ENCODE measurements at regions of chr12 and their contacts with region 1.

Region 1: GRCh38 chr12:12356886-12357718 is at the start of gene BORCS5:
- DNase-seq: peak; percentile 97 to 99 (median 99)
- H3K4me3 ChIP-seq: peak within 1 kb of the TSS; percentile 62
- H3K4me3 Mint-ChIP-seq: peak within 1 kb of the TSS; percentile 88 to 98 (median 97)
- H3K27ac ChIP-seq: peak within 1 kb of the TSS; percentile 94
- H3K27ac Mint-ChIP-seq: peak within 1 kb of the TSS; percentile 91 to 100 (median 99)
- H3K4me1 ChIP-seq: peaks cover 26% of the 10 kb centered on the region
- H3K4me1 Mint-ChIP-seq: peaks cover 36 to 54% (median 52%) of the 10 kb centered on the region in 3 donors
- H3K27me3 ChIP-seq: no peaks in the 10 kb centered on the region
- H3K27me3 Mint-ChIP-seq: peaks cover 0 to 1% of the 10 kb centered on the region in 2 donors
- total RNA-seq, gene BORCS5: 36.4 to 39.7 TPM

Region 2: DNA sequence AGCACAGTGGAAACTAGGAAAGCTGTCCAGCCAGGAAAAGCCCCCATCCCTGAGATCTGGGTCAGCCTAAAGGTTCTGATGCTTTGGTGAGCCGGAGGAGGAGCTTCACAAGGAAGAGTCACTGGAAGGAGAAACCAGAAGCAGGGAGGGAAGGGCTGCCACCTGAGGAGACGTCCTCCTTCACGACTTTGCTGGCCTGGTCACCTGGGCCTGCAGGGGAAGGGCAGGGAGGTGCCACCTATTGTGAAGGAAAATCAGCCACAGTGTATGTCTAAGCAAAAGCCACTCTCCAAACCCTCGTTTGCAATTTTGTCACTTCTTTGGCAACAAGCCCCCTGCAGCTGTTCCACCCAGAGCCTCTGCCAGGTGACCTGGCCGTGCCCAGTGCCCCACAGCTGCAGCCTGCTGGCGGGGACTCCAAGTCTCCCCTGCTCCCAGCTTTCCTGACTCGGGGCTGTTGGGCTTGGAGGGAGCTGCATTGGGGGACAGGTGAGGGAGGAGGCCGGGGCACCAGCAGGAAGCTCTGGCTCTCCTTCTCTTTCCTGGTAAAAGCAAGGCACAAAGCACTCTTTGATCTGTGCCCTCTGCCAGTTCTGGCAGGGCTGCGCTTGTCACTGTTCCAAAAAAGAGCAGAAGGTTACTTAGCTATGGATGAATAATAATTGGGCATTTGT is 407.2 kb before region 1 on chr12:
- CTCF ChIA-PET with region 1: no interaction called
- POLR2A ChIA-PET with region 1: no interaction called
- DNase-seq: no peak
- H3K4me3 ChIP-seq: no peak overlapping the region
- H3K4me3 Mint-ChIP-seq: no peak overlapping the region
- H3K27ac ChIP-seq: no peak overlapping the region
- H3K27ac Mint-ChIP-seq: peak overlapping the region in 1 of 8 donors; percentile 48
- H3K4me1 ChIP-seq: no peaks in the 10 kb centered on the region
- H3K4me1 Mint-ChIP-seq: peaks cover 15 to 21% (median 16%) of the 10 kb centered on the region in 3 donors
- H3K27me3 ChIP-seq: no peaks in the 10 kb centered on the region
- H3K27me3 Mint-ChIP-seq: peaks cover 7 to 12% of the 10 kb centered on the region in 2 donors

Region 3: DNA sequence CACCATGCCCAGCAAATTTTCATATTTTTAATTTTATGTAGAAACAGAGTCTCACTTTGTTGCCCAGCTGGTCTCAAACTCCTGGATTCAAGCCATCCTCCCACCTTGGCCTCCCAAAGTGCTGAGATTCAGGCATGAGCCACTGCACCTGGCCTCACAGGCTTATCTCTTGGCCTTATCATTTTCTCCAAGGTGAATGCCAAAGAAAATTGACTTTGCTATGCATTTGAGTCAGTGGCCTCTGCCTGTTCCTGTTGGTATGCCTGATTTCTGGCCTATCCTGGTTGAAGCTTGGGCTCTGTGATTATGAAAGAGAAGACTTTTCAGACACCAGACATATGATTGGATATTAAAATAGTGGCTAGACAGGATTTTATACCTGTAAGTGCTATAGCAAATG is 41.3 kb before region 1 on chr12:
- CTCF ChIA-PET with region 1: no interaction called
- POLR2A ChIA-PET with region 1: no interaction called
- DNase-seq: no peak
- H3K4me3 ChIP-seq: no peak overlapping the region
- H3K4me3 Mint-ChIP-seq: no peak overlapping the region
- H3K27ac ChIP-seq: no peak overlapping the region
- H3K27ac Mint-ChIP-seq: no peak overlapping the region
- H3K4me1 ChIP-seq: no peaks in the 10 kb centered on the region
- H3K4me1 Mint-ChIP-seq: no peaks in the 10 kb centered on the region
- H3K27me3 ChIP-seq: no peaks in the 10 kb centered on the region
- H3K27me3 Mint-ChIP-seq: peaks cover 7 to 26% of the 10 kb centered on the region in 2 donors

Region 4: DNA sequence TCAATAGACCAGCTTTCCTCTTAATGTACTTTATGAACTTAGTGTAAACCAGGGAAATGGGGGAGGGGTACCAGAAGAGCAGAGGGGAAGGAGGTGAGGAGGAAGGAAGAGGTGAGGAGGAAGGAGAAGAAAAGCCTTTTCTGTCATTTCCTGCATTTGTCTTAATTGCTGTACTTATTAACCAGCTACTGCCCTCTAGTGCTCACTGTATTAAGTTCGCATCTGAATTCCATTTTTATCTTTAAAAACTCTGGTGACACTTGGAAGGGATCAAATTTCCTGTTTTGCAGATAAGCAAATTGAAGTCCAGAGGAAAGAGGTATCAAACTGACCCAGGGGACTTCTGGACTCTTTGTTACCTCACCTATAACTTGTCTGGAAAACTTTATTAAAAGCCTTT is 29.3 kb before region 1 on chr12:
- CTCF ChIA-PET with region 1: interaction called, 18 read pairs
- POLR2A ChIA-PET with region 1: interaction called, 5 read pairs
- DNase-seq: peak in 2 of 5 donors; percentile 37 to 51
- H3K4me3 ChIP-seq: no peak overlapping the region
- H3K4me3 Mint-ChIP-seq: no peak overlapping the region
- H3K27ac ChIP-seq: no peak overlapping the region
- H3K27ac Mint-ChIP-seq: peak overlapping the region in 5 of 8 donors; percentile 20 to 85 (median 59)
- H3K4me1 ChIP-seq: peaks cover 9% of the 10 kb centered on the region
- H3K4me1 Mint-ChIP-seq: peaks cover 4 to 9% (median 8%) of the 10 kb centered on the region in 3 donors
- H3K27me3 ChIP-seq: no peaks in the 10 kb centered on the region
- H3K27me3 Mint-ChIP-seq: no peaks in the 10 kb centered on the region

Region 5: DNA sequence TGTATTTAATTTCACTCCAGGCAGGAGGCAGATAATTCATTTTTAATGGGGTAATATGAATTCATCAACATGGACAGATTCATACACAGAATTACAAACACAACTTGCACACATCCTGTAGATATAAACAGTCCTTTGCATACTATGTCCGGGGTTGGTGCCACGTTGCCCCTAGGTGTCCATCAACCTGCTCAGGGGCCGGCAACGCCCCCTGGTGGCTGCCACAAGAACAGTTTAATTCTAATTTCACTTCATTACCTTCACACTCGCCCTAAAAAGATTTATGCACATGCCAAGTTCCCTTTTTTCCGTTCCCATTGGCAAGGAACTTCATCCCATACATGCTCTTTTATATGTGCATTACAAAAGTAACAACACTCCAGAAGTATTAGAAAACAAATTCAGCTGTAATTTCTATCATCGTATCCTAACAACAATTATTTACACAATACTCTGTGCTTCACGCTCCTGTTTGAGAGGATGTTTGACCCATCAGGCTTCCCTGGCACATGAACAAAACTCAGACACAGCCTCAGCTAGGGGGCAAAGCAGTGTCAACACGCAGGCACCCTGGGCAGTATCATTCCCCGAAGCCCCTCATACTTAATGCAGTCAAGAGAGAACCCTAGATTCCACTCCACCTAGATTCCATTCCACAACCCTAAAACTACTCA is 22.6 kb before region 1 on chr12:
- CTCF ChIA-PET with region 1: interaction called, 18 read pairs
- POLR2A ChIA-PET with region 1: interaction called, 4 read pairs
- DNase-seq: peak; percentile 50 to 69 (median 59)
- H3K4me3 ChIP-seq: no peak overlapping the region
- H3K4me3 Mint-ChIP-seq: peak overlapping the region in 2 of 7 donors; percentile 7 to 15
- H3K27ac ChIP-seq: no peak overlapping the region
- H3K27ac Mint-ChIP-seq: peak overlapping the region in 1 of 8 donors; percentile 29
- H3K4me1 ChIP-seq: peaks cover 6% of the 10 kb centered on the region
- H3K4me1 Mint-ChIP-seq: peaks cover 8 to 15% (median 14%) of the 10 kb centered on the region in 3 donors
- H3K27me3 ChIP-seq: no peaks in the 10 kb centered on the region
- H3K27me3 Mint-ChIP-seq: peaks cover 1 to 7% of the 10 kb centered on the region in 2 donors

Region 6: DNA sequence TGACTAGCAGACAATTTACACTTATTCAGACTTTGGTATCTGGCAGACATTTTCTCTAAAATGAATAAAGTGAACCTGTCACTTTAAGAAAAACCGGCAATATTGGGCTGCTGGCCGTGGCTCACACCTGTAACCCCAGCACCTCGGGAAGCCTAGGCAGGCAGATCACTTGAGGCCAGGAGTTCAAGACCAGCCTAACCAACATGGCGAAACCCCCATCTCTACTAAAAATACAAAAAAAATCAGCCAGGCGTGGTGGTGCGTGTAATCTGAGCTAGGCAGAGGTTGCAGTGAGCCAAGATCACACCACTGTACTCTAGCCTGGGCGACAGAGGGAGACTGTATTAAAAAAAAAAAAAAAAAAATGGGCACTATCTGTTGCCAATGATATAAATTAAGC is 194.0 kb after region 1 on chr12:
- CTCF ChIA-PET with region 1: interaction called, 6 read pairs
- POLR2A ChIA-PET with region 1: interaction called, 12 read pairs
- DNase-seq: no peak
- H3K4me3 ChIP-seq: no peak overlapping the region
- H3K4me3 Mint-ChIP-seq: no peak overlapping the region
- H3K27ac ChIP-seq: no peak overlapping the region
- H3K27ac Mint-ChIP-seq: peak overlapping the region in 4 of 8 donors; percentile 17 to 52 (median 30)
- H3K4me1 ChIP-seq: no peaks in the 10 kb centered on the region
- H3K4me1 Mint-ChIP-seq: peaks cover 29 to 52% (median 42%) of the 10 kb centered on the region in 3 donors
- H3K27me3 ChIP-seq: no peaks in the 10 kb centered on the region
- H3K27me3 Mint-ChIP-seq: no peaks in the 10 kb centered on the region

Region 7: GRCh38 chr12:12562585-12563261 is 205.6 kb after region 1 on chr12 and contains the start of gene DUSP16:
- CTCF ChIA-PET with region 1: interaction called, 10 read pairs
- POLR2A ChIA-PET with region 1: interaction called, 22 read pairs
- DNase-seq: peak; percentile 66 to 89 (median 88)
- H3K4me3 ChIP-seq: peak within 1 kb of the TSS; percentile 71
- H3K4me3 Mint-ChIP-seq: peak within 1 kb of the TSS; percentile 91 to 96 (median 92)
- H3K27ac ChIP-seq: peak within 1 kb of the TSS; percentile 95
- H3K27ac Mint-ChIP-seq: peak within 1 kb of the TSS; percentile 97 to 99 (median 98)
- H3K4me1 ChIP-seq: peaks cover 27% of the 10 kb centered on the region
- H3K4me1 Mint-ChIP-seq: peaks cover 31 to 42% (median 40%) of the 10 kb centered on the region in 3 donors
- H3K27me3 ChIP-seq: no peaks in the 10 kb centered on the region
- H3K27me3 Mint-ChIP-seq: peaks cover 0 to 4% of the 10 kb centered on the region in 2 donors
- total RNA-seq, gene DUSP16: 37.5 to 41.2 TPM

Region 8: GRCh38 chr12:12716793-12717585 is 359.9 kb after region 1 on chr12 and contains the start of gene CDKN1B:
- CTCF ChIA-PET with region 1: interaction called, 14 read pairs
- POLR2A ChIA-PET with region 1: interaction called, 67 read pairs
- DNase-seq: peak; percentile 82 to 92 (median 87)
- H3K4me3 ChIP-seq: peak within 1 kb of the TSS; percentile 96
- H3K4me3 Mint-ChIP-seq: peak within 1 kb of the TSS; percentile 92 to 99 (median 99)
- H3K27ac ChIP-seq: peak within 1 kb of the TSS; percentile 98
- H3K27ac Mint-ChIP-seq: peak within 1 kb of the TSS; percentile 96 to 100 (median 98)
- H3K4me1 ChIP-seq: peaks cover 37% of the 10 kb centered on the region
- H3K4me1 Mint-ChIP-seq: peaks cover 52 to 68% (median 62%) of the 10 kb centered on the region in 3 donors
- H3K27me3 ChIP-seq: no peaks in the 10 kb centered on the region
- H3K27me3 Mint-ChIP-seq: peaks cover 0 to 2% of the 10 kb centered on the region in 2 donors
- total RNA-seq, gene CDKN1B: 47.1 to 48.7 TPM

Region 9: DNA sequence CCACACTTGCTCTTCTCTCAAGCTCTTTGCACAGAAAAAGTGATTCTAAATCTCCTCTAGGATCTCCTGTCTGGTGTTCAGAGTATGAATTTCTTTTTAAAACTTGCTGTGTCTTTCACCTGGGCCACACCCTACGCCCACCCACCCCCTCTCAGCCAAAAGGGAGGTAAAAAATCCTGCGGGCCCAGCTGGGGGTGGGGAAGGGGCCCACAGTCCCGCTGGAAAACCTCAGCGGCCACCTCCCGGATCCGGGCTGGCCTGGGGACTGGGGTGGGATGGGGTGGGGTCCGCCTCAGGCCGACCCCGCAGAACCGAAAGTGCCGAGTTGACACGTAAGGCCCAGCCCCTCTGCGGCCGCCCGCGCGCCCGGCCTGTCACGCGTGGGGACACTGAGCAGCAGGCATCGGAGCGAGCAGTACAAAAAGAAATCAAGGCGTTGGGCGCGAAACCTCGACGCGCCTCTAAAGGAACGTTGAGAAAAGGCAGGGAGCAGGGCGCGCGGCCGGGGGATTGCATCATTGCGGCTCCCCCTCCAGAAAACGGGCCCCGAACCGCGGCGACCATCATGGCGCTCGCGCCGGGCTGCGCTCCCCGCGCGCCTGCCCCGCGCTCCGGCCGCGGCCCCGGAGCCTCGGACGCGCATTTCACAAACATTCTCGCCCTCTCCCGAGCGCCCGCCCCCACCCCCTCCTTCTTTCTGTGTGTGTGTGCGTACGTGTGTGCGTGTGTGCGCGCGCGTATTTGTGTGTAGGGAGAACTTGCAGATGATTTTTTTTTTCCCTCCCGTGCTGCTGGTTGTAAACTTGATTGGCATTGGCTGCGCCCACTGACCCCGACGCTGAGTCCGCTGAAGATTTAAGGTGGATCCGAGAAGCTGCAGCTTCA is 367.8 kb after region 1 on chr12:
- CTCF ChIA-PET with region 1: interaction called, 14 read pairs
- POLR2A ChIA-PET with region 1: interaction called, 67 read pairs
- DNase-seq: peak; percentile 82 to 96 (median 94)
- H3K4me3 ChIP-seq: peak overlapping the region; percentile 46
- H3K4me3 Mint-ChIP-seq: peak overlapping the region; percentile 89 to 99 (median 96)
- H3K27ac ChIP-seq: peak overlapping the region; percentile 98
- H3K27ac Mint-ChIP-seq: peak overlapping the region; percentile 92 to 99 (median 95)
- H3K4me1 ChIP-seq: peaks cover 44% of the 10 kb centered on the region
- H3K4me1 Mint-ChIP-seq: peaks cover 56 to 64% (median 56%) of the 10 kb centered on the region in 3 donors
- H3K27me3 ChIP-seq: no peaks in the 10 kb centered on the region
- H3K27me3 Mint-ChIP-seq: peaks cover 0 to 11% of the 10 kb centered on the region in 2 donors